Activated CD8-positive, alpha-beta memory T cell treated with anti-CD3 and anti-CD28 coated beads, Interleukin-2, amount 10 ng/mL, durations not matched to agents 7 days and 5 days (primary cell): ENCODE measurements at regions of chr1 and their contacts with region 1.

Region 1: DNA sequence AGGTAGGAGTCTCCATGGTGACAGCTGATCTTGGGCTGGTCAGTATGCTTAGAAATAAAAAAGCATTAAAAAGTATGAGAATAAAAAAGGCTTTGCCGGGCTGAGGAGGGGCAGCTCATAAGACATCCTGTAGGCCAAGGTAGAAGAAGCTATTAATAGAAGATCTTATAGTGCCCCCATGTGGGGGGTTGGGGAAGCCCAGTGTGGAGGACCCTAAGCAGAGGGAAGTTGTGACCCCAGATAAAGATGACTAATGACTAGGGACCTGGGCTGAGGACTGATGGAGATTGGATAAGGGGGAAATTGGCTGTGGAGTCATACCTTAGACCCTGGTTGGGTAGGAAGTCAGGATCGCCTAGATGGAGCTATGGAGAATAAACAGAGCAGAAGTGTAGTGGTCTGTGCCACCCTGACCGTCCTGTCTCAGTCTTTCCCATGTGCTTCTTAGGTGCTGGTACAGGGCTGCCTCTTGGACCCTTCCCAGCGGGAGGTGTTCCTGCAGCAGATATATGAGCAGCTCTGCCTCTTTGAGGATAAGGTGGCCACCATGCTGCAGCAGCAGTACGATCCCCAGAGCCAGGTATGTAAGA is 25.0 kb downstream of the SZT2 start:
- DNase-seq: peak; percentile 72
- ATAC-seq: peak; percentile 93
- H3K4me3 Mint-ChIP-seq: no peak overlapping the region
- H3K27ac Mint-ChIP-seq: no peak overlapping the region
- H3K4me1 Mint-ChIP-seq: no peaks in the 10 kb centered on the region
- H3K27me3 Mint-ChIP-seq: no peaks in the 10 kb centered on the region

Region 2: DNA sequence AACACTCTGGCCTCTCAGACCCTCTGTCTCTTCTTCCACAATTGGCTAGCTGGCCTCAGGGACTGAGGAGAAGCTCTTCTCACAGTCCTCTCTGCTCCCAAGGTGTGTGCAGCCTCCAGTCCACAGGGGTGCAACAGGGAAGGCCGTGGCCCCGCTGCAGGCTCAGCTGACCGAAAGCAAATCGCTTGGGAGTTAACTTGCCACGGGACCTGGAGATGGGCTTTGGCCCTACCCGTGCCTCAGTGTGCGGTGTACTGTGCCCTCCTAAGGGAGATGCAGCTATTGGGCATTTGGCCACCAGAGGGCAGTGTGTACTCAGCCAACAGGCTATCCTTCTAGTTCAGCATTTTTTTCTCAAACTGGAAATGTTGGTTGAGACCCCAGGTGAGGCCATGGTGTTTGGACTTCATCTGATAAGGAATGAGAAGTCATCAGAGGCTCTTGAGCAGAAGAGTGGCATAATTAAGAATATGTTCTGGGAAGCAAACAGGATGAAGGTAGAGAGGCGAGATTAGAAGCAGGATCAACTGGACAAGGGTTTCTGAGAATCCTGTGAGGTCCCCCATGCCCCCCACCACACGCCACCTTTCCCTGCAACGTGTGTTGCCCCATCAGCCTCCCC is 187.5 kb before region 1 on chr1:
- CTCF ChIA-PET with region 1: interaction called, 102 read pairs
- DNase-seq: peak; percentile 87
- ATAC-seq: peak; percentile 91
- H3K4me3 Mint-ChIP-seq: no peak overlapping the region
- H3K27ac Mint-ChIP-seq: no peak overlapping the region
- H3K4me1 Mint-ChIP-seq: peaks cover 1% of the 10 kb centered on the region
- H3K27me3 Mint-ChIP-seq: no peaks in the 10 kb centered on the region

Region 3: DNA sequence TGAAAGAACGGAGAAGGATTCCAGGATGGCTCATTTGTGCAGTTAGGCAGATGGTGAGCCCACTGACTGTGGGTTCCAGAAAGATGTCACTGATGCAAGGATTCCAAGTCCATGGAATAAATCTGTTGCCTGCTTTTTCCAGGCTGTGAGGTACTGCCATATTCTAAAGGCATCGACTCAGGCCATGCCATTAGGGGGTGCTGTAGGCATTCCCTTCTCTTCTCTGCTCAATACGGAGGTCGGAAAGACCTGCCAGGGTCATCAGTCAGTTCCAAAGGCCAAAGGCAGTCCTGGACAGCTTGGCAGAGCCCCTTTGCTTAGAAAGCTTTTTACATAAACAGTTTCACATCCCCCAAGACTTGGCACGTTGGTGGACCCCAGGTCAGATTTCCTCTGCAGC is 176.6 kb before region 1 on chr1:
- CTCF ChIA-PET with region 1: interaction called, 18 read pairs
- DNase-seq: peak; percentile 65
- ATAC-seq: peak; percentile 51
- H3K4me3 Mint-ChIP-seq: no peak overlapping the region
- H3K27ac Mint-ChIP-seq: no peak overlapping the region
- H3K4me1 Mint-ChIP-seq: peaks cover 4% of the 10 kb centered on the region
- H3K27me3 Mint-ChIP-seq: peaks cover 7% of the 10 kb centered on the region

Region 4: GRCh38 chr1:43243299-43243698 is 171.4 kb before region 1 on chr1:
- CTCF ChIA-PET with region 1: interaction called, 18 read pairs
- DNase-seq: no peak
- ATAC-seq: no peak
- H3K4me3 Mint-ChIP-seq: no peak overlapping the region
- H3K27ac Mint-ChIP-seq: no peak overlapping the region
- H3K4me1 Mint-ChIP-seq: peaks cover 4% of the 10 kb centered on the region
- H3K27me3 Mint-ChIP-seq: peaks cover 30% of the 10 kb centered on the region

Region 5: DNA sequence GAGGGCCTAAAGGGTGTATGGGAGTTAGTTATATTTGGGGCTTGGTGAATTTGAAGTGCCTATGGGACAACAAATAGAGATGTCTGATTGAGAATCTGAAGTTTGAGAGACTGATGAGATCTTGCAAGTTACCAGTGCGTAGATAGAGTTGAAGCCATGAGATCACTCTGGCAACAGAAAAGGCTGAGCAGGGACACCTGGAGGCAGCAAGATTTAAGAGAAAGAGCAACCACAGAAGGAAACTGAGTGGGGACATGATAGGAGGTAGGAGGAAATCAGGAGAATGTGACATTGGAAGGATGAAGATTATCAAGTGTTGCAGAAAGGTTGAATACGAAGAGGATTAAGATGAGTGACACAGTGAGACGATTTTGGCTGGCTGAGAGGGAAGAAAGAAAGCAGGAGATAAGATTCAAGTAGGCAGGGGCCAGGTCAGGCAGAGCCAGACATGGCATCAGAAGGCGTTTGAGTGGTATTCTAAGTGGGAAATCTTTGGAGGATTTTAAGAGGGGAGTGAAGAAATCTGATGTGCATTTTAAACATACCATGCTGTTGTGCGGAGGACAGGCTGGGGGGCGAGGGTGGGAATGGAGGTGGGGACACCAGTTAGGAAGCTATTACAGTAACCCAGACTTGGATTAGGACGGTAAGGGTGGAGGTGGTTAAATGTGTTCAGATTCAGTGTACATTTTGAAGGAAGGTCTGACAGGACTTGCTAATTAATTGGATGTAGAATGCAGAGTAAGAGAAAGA is 80.1 kb before region 1 on chr1:
- CTCF ChIA-PET with region 1: no interaction called
- DNase-seq: no peak
- ATAC-seq: no peak
- H3K4me3 Mint-ChIP-seq: no peak overlapping the region
- H3K27ac Mint-ChIP-seq: no peak overlapping the region
- H3K4me1 Mint-ChIP-seq: peaks cover 6% of the 10 kb centered on the region
- H3K27me3 Mint-ChIP-seq: no peaks in the 10 kb centered on the region

Region 6: GRCh38 chr1:43383449-43383848 is 31.3 kb before region 1 on chr1:
- CTCF ChIA-PET with region 1: no interaction called
- DNase-seq: no peak
- ATAC-seq: no peak
- H3K4me3 Mint-ChIP-seq: no peak overlapping the region
- H3K27ac Mint-ChIP-seq: no peak overlapping the region
- H3K4me1 Mint-ChIP-seq: peaks cover 9% of the 10 kb centered on the region
- H3K27me3 Mint-ChIP-seq: no peaks in the 10 kb centered on the region

Region 7: GRCh38 chr1:43402089-43402865 is 12.5 kb before region 1 on chr1:
- CTCF ChIA-PET with region 1: no interaction called
- DNase-seq: no peak
- ATAC-seq: no peak
- H3K4me3 Mint-ChIP-seq: no peak overlapping the region
- H3K27ac Mint-ChIP-seq: no peak overlapping the region
- H3K4me1 Mint-ChIP-seq: no peaks in the 10 kb centered on the region
- H3K27me3 Mint-ChIP-seq: no peaks in the 10 kb centered on the region